ENCODE measurements at regions of chr6 and their contacts with region 1.

Region 1: GRCh38 chr6:109187399-109188114 is 92.2 kb downstream of the CEP57L1 start:
- DNase-seq: peak; percentile 66
- H3K4me3 ChIP-seq: no peak overlapping the region
- H3K27ac ChIP-seq: no peak overlapping the region
- H3K4me1 ChIP-seq: no peaks in the 10 kb centered on the region
- H3K27me3 ChIP-seq: no peaks in the 10 kb centered on the region
- CTCF ChIP-seq: peak; percentile 59 to 92 (median 82)
- EP300 ChIP-seq: no peak
- POLR2A ChIP-seq: no peak

Region 2: DNA sequence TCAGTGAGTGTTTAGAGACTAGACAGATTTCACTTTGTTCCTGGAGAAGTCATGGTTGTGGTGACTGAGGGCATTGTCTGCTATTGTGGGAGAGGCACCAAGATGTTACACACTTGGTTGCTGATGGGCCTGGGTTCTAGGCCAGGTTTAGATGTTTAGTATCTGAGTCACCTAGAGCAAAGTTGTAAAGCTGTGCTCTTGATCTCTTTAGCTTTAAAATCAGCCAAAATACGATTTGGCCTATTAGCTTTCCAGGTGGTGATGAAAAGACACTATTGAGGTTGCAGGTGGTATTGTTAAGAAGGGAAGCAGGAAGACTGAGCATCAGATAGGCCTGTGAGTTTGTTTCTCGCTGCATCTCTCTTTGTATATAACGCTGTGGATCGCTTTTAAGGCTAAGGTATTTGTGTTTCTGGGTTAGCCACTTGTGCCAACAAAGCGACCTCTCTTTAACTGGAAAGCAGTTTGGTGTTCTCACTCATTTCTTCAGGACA is 578.2 kb before region 1 on chr6:
- intact Hi-C with region 1: no loop called
- DNase-seq: no peak
- H3K4me3 ChIP-seq: no peak overlapping the region
- H3K27ac ChIP-seq: peak overlapping the region; percentile 55 to 74 (median 67)
- H3K4me1 ChIP-seq: peaks cover 0 to 72% (median 65%) of the 10 kb centered on the region in 4 donors
- H3K27me3 ChIP-seq: no peaks in the 10 kb centered on the region
- CTCF ChIP-seq: no peak
- EP300 ChIP-seq: no peak
- POLR2A ChIP-seq: no peak

Region 3: GRCh38 chr6:109024784-109025183 is 162.8 kb before region 1 on chr6:
- intact Hi-C with region 1: no loop called
- DNase-seq: no peak
- H3K4me3 ChIP-seq: no peak overlapping the region
- H3K27ac ChIP-seq: no peak overlapping the region
- H3K4me1 ChIP-seq: peaks cover 0 to 11% (median 5%) of the 10 kb centered on the region in 4 donors
- H3K27me3 ChIP-seq: no peaks in the 10 kb centered on the region
- CTCF ChIP-seq: no peak
- EP300 ChIP-seq: no peak
- POLR2A ChIP-seq: no peak

Region 4: DNA sequence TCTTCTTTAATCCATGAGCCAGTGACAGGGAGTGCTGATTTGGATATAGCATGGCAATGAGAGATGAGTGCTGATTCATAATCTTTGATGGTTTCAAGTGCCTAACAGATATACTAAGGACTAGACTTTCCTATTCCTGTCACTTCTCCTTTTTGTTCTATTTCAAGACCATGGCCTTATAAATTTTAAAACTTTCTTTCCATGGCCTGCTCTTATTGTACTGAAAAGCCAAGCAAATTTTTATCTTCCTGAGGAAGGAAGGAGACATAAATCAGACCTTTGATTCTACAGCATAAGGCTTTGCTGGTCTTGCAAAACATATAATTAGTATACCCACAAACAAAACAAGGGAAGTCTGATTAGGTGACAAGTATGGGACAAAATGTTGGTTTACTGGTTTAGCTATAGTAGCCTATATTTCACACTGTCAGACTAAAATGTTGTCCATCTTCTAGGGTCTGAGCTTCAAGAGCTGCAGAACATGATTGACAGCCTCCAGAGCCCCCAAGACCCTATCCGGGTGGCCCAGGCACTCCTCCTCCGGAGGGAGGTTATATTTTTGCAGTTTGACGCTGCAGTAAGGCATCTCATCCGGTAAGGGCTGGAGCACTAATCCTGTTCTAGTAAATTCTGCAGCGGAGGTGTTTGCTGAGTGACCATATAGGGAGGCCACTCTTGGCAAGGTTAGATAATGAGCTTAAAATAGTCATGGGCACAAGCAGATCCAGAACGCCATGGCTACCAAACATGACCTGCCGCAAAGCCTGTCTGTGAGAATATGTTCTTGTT is 112.4 kb after region 1 on chr6:
- intact Hi-C with region 1: loop called (anchors 5 kb)
- DNase-seq: peak; percentile 82
- H3K4me3 ChIP-seq: no peak overlapping the region
- H3K27ac ChIP-seq: peak overlapping the region; percentile 78 to 85 (median 84)
- H3K4me1 ChIP-seq: peaks cover 0 to 60% (median 41%) of the 10 kb centered on the region in 4 donors
- H3K27me3 ChIP-seq: no peaks in the 10 kb centered on the region
- CTCF ChIP-seq: no peak
- EP300 ChIP-seq: peak in 2 of 4 donors; percentile 38 to 76
- POLR2A ChIP-seq: no peak

Region 5: GRCh38 chr6:109397020-109397419 is 209.5 kb after region 1 on chr6:
- intact Hi-C with region 1: loop called (anchors 5 kb)
- DNase-seq: no peak
- H3K4me3 ChIP-seq: no peak overlapping the region
- H3K27ac ChIP-seq: no peak overlapping the region
- H3K4me1 ChIP-seq: no peaks in the 10 kb centered on the region
- H3K27me3 ChIP-seq: no peaks in the 10 kb centered on the region
- CTCF ChIP-seq: peak in 1 of 4 experiments; percentile 13
- EP300 ChIP-seq: no peak
- POLR2A ChIP-seq: no peak

Measured in sigmoid colon (tissue), 7 donors.